Lower lobe of right lung (tissue), 2 donors: ENCODE measurements at regions of chr4 and their contacts with region 1.

Region 1: GRCh38 chr4:69167300-69167699 is 47.2 kb downstream of the UGT2B11 start:
- DNase-seq: no peak
- ATAC-seq: no peak
- H3K4me3 ChIP-seq: no peak overlapping the region
- H3K27ac ChIP-seq: no peak overlapping the region
- H3K4me1 ChIP-seq: no peaks in the 10 kb centered on the region
- H3K27me3 ChIP-seq: no peaks in the 10 kb centered on the region
- CTCF ChIP-seq: no peak

Region 2: DNA sequence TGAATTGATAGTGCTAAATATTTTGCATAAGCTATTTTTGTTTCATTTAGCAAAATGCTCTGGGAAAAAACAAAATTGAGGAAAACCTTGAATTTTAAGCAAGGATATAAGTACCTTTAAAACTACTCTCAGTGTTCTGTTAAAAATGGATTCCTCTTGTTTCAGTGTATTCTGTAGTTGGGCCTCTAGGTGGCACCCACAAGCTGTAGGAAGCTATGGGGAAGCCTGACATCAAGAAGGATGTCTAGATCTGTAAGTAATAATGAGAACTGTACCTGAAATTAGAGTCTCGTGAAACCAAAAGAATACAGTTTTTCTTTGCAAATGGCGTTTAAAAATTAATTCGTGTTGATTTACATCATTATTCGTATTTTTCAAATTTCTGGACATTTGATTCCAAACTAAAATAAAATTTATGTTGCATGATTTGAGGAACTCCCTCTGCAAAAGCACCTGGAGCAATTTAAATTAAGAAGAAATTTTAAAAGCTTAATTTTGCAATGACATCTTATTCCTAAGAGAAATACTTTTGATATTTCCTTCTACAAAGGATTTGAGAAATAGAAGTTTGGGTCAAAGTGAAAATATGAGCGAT is 668.8 kb before region 1 on chr4:
- intact Hi-C with region 1: loop called (anchors 10 kb)
- DNase-seq: no peak
- ATAC-seq: peak; percentile 89 to 92
- H3K4me3 ChIP-seq: no peak overlapping the region
- H3K27ac ChIP-seq: no peak overlapping the region
- H3K4me1 ChIP-seq: no peaks in the 10 kb centered on the region
- H3K27me3 ChIP-seq: no peaks in the 10 kb centered on the region
- CTCF ChIP-seq: peak; percentile 84

Region 3: GRCh38 chr4:68951078-68951805 is 216.1 kb before region 1 on chr4 and contains the start of gene UGT2A3:
- intact Hi-C with region 1: no loop called
- DNase-seq: no peak
- ATAC-seq: no peak
- H3K4me3 ChIP-seq: no peak within 1 kb of the TSS
- H3K27ac ChIP-seq: no peak within 1 kb of the TSS
- H3K4me1 ChIP-seq: no peaks in the 10 kb centered on the region
- H3K27me3 ChIP-seq: no peaks in the 10 kb centered on the region
- CTCF ChIP-seq: no peak
- total RNA-seq, gene UGT2A3: not detected